RWPE1 (cell line): ENCODE measurements at regions of chr17 and their contacts with region 1.

Region 1: DNA sequence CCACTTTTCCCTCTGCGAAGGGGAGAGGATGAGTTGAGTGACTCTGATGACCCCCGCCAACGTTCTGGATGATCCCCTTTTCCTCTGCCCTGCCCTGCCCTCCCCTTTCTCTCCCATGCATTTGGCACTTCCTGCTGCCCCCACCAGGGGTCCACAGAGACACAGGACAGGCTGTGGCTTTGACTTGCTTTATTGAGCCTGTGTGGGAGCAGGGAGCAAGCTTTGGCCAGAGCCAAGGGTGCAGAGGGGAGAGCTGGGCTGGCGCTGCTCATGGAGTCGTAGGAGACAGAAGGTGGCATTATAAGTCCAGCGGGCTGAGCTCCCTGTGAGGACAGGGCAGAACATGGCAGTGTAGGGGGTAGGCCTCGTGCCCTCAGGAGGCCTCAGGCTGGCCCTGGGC is 1.6 kb downstream of the PPY start:
- DNase-seq: no peak
- H3K27ac ChIP-seq: no peak overlapping the region
- CTCF ChIP-seq: peak; percentile 29

Region 2: GRCh38 chr17:43900183-43900857 is 40.3 kb before region 1 on chr17:
- CTCF ChIA-PET with region 1: no interaction called
- POLR2A ChIA-PET with region 1: no interaction called
- DNase-seq: peak; percentile 97
- H3K27ac ChIP-seq: no peak overlapping the region
- CTCF ChIP-seq: no peak

Region 3: DNA sequence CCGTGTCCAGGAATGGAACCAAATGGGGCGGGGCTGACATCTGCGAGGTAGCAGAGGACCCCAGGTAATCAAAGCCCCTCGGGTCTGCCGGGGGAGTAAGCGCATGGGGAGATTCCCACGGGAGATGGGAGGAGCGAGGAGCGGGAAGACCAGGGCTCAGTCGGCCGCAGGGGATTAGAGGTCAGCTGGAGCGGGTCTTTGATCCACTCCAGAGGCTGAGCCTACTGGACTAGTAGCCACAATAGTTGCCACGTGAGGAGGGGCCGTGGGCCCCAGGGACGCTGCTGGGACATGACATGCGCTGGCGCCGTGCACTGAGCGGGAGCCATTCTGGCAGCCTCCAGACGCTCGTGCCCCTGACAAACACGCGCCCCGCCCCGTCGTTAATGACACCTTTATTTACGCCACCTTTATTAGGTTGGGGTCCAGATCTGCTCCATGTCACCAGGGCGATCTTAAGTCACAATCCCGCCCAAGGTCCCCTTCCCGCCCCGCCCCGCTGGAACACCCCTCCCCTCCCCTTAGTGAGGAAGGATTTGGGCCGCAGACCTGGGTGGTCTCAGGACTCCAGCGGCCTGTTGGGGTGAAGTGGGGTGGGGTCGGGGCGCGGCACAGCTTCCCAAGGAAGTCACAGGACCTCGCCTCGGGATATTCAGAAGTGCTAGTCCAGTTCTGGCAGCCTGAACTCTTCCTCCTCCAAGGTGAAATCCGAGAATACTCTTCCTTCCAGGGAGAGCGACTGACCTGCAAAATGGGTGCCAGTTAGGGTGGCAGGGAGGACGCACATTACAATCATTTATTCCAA is 13.4 kb before region 1 on chr17:
- CTCF ChIA-PET with region 1: interaction called, 10 read pairs
- POLR2A ChIA-PET with region 1: no interaction called
- DNase-seq: no peak
- H3K27ac ChIP-seq: no peak overlapping the region
- CTCF ChIP-seq: no peak

Region 4: DNA sequence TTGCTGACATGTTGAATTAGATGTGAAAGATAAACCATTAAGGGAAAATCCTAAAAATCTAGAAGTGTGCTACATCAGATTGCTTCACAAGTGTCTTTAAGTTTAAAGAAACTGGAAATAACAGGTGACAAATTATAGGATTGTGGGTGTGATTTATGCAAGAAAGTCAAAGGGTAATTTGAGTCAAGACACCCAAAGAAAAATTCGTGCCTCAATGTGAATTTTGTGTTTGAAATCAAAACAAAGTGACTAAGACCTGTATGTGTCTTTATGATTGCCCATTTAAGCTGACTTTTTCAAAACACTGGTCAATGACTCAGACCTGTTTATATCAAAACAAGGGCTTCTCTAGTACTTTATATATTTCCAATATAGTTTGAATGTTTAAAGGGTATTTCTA is 18.3 kb after region 1 on chr17:
- CTCF ChIA-PET with region 1: interaction called, 22 read pairs
- POLR2A ChIA-PET with region 1: no interaction called
- DNase-seq: no peak
- H3K27ac ChIP-seq: no peak overlapping the region
- CTCF ChIP-seq: no peak

Region 5: GRCh38 chr17:43994272-43995149 is 53.9 kb after region 1 on chr17:
- CTCF ChIA-PET with region 1: interaction called, 18 read pairs
- POLR2A ChIA-PET with region 1: interaction called, 3 read pairs
- DNase-seq: peak; percentile 63
- H3K27ac ChIP-seq: no peak overlapping the region
- CTCF ChIP-seq: peak; percentile 87

Region 6: DNA sequence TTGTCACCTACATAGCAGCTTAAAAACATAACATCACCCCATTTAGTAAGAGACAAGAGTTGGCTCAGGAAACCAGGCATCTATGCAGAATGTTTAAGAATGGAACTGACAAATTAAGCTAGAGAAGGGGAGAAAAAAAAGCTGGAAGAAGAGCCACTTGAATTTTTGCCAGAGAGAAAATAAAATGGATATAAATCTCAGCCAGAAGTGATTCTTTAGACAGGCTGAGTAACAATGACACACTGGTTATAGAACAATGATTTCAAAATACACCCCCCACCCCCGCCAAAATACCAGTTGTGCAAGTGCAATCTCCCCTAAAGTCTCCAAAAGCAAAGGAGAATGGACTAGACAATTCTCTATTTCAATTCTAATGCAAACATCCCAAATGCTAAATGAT is 103.4 kb after region 1 on chr17:
- CTCF ChIA-PET with region 1: interaction called, 12 read pairs
- POLR2A ChIA-PET with region 1: no interaction called
- DNase-seq: peak; percentile 57
- H3K27ac ChIP-seq: no peak overlapping the region
- CTCF ChIP-seq: no peak

Region 7: GRCh38 chr17:44186307-44187130 is 245.9 kb after region 1 on chr17 and contains the start of gene TMUB2:
- CTCF ChIA-PET with region 1: no interaction called
- POLR2A ChIA-PET with region 1: no interaction called
- DNase-seq: peak; percentile 100
- H3K27ac ChIP-seq: peak within 1 kb of the TSS; percentile 94
- CTCF ChIP-seq: no peak

Region 8: GRCh38 chr17:44247440-44247841 is 306.8 kb after region 1 on chr17:
- CTCF ChIA-PET with region 1: no interaction called
- POLR2A ChIA-PET with region 1: no interaction called
- DNase-seq: no peak
- H3K27ac ChIP-seq: no peak overlapping the region
- CTCF ChIP-seq: no peak